Endothelial cell of umbilical vein (primary cell): ENCODE measurements at regions of chr9 and their contacts with region 1.

Region 1: DNA sequence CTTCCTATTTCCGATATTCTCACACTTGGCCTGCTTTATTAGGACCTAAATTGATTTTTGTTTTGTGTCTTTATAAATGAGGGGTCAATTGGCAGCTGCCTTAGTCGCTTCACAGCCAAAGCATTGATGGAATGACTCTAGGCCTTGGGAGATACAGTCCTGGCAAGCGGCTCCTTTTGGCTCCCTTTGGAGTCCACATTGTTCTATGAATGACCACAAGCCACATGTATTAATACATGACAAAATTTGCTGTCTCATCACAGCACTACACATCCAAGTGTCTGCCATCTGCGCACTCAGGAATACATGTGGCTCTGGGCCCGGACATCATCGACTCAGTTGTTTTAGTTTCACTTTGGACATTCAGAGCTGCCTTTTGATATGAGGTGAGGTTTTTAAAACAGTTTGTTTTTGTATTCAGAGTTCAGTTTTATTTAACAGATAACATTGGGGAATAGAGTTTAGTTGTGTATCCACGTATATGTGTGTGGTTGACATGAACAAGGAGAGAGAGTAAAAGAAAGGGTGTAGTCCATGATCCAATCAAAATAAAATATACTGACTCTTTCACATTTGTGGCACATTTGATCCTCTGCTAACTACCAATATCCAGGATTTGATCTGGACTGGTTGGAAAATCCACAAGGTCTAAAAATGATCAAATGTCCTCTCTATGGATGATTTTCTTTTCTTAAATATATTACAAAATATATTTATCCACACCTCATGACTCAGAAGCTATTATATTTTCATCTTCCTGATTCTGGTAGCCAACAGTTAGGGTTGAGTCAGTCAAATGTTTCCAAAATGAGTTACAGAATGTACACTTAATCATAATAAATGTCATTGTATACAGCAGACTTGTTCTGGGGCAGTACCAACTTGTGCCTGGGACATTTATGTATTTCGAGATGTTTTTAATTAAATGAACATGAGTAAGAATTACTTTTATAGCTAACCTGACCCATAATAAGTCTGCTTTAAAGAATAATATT is 114.0 kb upstream of the MTAP start:
- DNase-seq: peak; percentile 83
- H3K4me3 ChIP-seq: no peak overlapping the region
- H3K27ac ChIP-seq: peak overlapping the region; percentile 70
- H3K4me1 ChIP-seq: peaks cover 61% of the 10 kb centered on the region
- H3K27me3 ChIP-seq: no peaks in the 10 kb centered on the region
- CTCF ChIP-seq: no peak
- POLR2A ChIP-seq: no peak

Region 2: DNA sequence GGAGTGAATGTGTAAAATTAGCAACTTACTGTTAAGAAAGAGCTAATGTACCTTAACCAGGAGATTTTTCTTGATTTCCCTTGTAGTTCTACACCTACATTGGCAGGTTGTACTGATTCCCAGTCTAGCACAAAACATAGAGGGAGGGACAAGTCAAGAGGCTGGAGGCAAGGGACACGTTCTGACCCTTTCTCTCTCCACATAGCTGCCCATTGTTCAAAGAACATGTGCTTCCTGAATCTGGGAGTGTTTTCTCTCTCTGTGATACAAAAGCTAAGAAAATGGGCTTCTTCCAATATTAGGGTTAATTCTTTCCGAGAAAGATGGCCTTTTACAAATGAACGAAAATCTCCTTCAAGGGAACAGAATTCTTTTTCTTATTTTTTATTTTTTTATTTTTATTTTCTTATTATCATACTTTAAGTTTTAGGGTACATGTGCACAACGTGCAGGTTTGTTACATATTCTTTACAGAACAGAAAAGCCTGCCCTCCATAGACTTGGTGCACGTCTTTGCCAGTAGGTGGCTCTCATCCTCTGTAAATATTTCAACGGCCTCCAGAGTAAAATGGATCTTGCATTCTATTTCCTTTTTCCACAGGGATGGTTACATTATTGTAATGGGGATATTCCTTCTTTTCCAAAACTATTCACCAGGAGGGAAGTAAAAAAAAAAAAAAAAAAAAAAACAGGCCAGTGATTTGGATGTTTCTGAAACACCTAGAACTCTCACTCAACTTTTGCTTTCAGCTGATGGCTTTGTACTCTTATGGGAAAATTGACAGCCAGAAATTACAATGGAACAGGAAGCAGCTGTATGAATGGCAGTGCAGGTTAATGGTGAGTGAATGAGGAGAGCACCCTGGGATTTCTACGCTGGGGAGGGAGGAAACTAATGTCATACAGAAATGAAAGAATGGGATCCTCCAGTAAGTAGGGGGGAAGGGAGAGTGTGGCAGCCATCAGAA is 370.2 kb before region 1 on chr9:
- CTCF ChIA-PET with region 1: no interaction called
- POLR2A ChIA-PET with region 1: no interaction called
- dilution Hi-C with region 1: no loop called
- intact Hi-C with region 1: loop called (anchors 5 kb)
- DNase-seq: peak; percentile 76
- H3K4me3 ChIP-seq: no peak overlapping the region
- H3K27ac ChIP-seq: peak overlapping the region; percentile 20
- H3K4me1 ChIP-seq: peaks cover 13% of the 10 kb centered on the region
- H3K27me3 ChIP-seq: peaks cover 10 to 22% of the 10 kb centered on the region in 2 experiments
- CTCF ChIP-seq: peak; percentile 37 to 61
- POLR2A ChIP-seq: no peak

Region 3: DNA sequence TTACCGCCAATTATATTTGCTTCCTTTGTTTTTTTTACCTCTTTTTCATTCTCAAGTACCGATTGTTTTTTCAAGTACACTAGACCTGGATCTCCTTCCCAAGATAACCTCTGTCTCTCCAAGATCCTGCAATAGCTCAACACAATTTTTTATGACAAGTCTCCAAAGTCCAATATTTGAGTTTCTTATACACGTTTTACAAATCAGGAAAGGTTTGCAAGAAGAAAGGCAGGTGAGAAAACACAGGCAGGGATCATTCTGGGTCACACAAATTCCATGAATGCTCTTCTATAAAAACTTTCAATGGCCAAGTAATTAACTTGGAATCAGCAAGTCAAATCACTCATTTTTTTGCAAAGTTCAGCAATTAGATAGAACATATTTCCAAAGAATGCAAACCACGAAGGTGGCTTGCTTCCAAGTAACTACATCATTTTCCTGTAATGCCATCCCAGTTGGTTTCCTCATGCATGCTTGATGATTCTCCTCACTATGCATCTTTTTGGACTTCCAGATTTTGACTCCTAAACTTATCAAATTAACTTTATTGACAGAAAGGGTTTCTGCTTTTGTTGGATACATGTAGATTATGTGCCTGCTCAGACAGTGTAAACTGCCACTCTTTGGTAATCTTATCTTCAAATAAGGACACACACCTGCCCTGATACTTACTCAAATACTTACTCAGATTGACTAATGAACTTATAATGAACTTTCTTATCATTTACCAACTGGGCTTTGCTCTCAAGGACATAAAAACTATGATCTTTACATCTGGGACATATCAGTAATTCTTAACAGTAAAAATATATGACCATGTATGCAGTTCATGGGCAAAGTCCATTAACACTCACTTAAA is 181.6 kb before region 1 on chr9:
- CTCF ChIA-PET with region 1: interaction called, 4 read pairs
- POLR2A ChIA-PET with region 1: no interaction called
- dilution Hi-C with region 1: no loop called
- intact Hi-C with region 1: loop called (anchors 2 kb)
- DNase-seq: peak; percentile 79
- H3K4me3 ChIP-seq: no peak overlapping the region
- H3K27ac ChIP-seq: peak overlapping the region; percentile 19
- H3K4me1 ChIP-seq: peaks cover 29% of the 10 kb centered on the region
- H3K27me3 ChIP-seq: no peaks in the 10 kb centered on the region
- CTCF ChIP-seq: no peak
- POLR2A ChIP-seq: no peak

Region 4: GRCh38 chr9:21576331-21577189 is 111.8 kb before region 1 on chr9:
- CTCF ChIA-PET with region 1: interaction called, 3 read pairs
- POLR2A ChIA-PET with region 1: no interaction called
- dilution Hi-C with region 1: no loop called
- intact Hi-C with region 1: loop called (anchors 1 kb)
- DNase-seq: peak; percentile 89
- H3K4me3 ChIP-seq: peak overlapping the region in 2 of 3 experiments; percentile 52 to 73
- H3K27ac ChIP-seq: peak overlapping the region; percentile 96
- H3K4me1 ChIP-seq: peaks cover 22% of the 10 kb centered on the region
- H3K27me3 ChIP-seq: no peaks in the 10 kb centered on the region
- CTCF ChIP-seq: no peak
- POLR2A ChIP-seq: no peak

Region 5: GRCh38 chr9:21638104-21638503 is 50.3 kb before region 1 on chr9:
- CTCF ChIA-PET with region 1: no interaction called
- POLR2A ChIA-PET with region 1: no interaction called
- dilution Hi-C with region 1: no loop called
- intact Hi-C with region 1: no loop called
- DNase-seq: no peak
- H3K4me3 ChIP-seq: no peak overlapping the region
- H3K27ac ChIP-seq: no peak overlapping the region
- H3K4me1 ChIP-seq: no peaks in the 10 kb centered on the region
- H3K27me3 ChIP-seq: no peaks in the 10 kb centered on the region
- CTCF ChIP-seq: no peak
- POLR2A ChIP-seq: no peak

Region 6: GRCh38 chr9:21677834-21678233 is 10.6 kb before region 1 on chr9:
- CTCF ChIA-PET with region 1: interaction called, 4 read pairs
- POLR2A ChIA-PET with region 1: no interaction called
- dilution Hi-C with region 1: no loop called
- intact Hi-C with region 1: loop called (anchors 1 kb)
- DNase-seq: peak; percentile 88
- H3K4me3 ChIP-seq: peak overlapping the region in 1 of 3 experiments; percentile 59
- H3K27ac ChIP-seq: peak overlapping the region; percentile 85
- H3K4me1 ChIP-seq: peaks cover 58% of the 10 kb centered on the region
- H3K27me3 ChIP-seq: no peaks in the 10 kb centered on the region
- CTCF ChIP-seq: no peak
- POLR2A ChIP-seq: no peak

Region 7: DNA sequence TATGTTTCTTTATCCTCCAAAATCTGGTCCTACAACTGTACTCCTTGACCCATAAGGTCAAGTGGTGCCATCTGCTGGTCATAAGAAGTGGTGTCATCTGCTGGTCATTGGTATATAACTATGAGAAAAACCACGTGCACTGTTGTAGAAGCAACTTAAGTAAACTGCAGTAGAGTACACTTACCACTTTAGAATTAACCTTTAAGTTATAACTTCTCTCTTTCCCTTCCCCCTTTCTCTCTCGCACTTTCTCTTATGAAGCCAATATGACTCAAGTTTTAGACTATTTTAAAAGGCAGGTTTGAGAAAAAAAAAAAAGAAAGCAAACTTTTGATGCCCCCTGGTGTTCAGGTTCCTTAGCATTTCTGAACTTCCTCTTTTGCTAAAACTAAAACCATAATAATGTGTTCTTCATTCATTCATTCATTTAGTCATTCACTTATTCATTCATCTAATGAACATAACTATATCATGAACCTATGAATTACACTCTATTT is 101.2 kb after region 1 on chr9:
- CTCF ChIA-PET with region 1: interaction called, 6 read pairs
- POLR2A ChIA-PET with region 1: no interaction called
- dilution Hi-C with region 1: no loop called
- intact Hi-C with region 1: loop called (anchors 1 kb)
- DNase-seq: peak; percentile 85
- H3K4me3 ChIP-seq: peak overlapping the region in 1 of 3 experiments; percentile 69
- H3K27ac ChIP-seq: no peak overlapping the region
- H3K4me1 ChIP-seq: no peaks in the 10 kb centered on the region
- H3K27me3 ChIP-seq: peaks cover 5 to 23% of the 10 kb centered on the region in 2 experiments
- CTCF ChIP-seq: peak; percentile 45 to 57
- POLR2A ChIP-seq: no peak

Region 8: DNA sequence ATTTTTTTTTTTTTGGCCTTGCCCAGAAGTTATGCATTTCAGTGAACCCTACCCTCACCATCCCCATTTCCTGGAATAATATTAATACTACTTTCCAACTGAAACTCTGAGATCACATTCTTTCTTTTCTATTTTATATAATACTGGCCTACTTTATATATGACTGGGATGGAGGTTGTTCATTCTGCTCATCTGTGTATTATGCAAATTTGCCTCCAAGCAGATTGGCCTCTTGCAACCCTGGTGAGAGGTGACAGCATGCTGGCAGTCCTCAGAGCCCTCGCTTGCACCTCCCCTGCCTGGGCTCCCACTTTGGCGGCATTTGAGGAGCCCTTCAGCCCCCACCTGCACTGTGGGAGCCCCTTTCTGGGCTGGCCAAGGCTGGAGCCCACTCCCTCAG is 270.4 kb after region 1 on chr9:
- CTCF ChIA-PET with region 1: no interaction called
- POLR2A ChIA-PET with region 1: no interaction called
- dilution Hi-C with region 1: no loop called
- intact Hi-C with region 1: no loop called
- DNase-seq: no peak
- H3K4me3 ChIP-seq: no peak overlapping the region
- H3K27ac ChIP-seq: no peak overlapping the region
- H3K4me1 ChIP-seq: no peaks in the 10 kb centered on the region
- H3K27me3 ChIP-seq: peaks cover 13 to 31% of the 10 kb centered on the region in 2 experiments
- CTCF ChIP-seq: no peak
- POLR2A ChIP-seq: no peak